Activated CD4-positive, alpha-beta T cell treated with anti-CD3 and anti-CD28 coated beads, Interleukin-2, amount 10 ng/mL, durations not matched to agents 7 days and 5 days (primary cell): ENCODE measurements at regions of chr5 and their contacts with region 1.

Region 1: DNA sequence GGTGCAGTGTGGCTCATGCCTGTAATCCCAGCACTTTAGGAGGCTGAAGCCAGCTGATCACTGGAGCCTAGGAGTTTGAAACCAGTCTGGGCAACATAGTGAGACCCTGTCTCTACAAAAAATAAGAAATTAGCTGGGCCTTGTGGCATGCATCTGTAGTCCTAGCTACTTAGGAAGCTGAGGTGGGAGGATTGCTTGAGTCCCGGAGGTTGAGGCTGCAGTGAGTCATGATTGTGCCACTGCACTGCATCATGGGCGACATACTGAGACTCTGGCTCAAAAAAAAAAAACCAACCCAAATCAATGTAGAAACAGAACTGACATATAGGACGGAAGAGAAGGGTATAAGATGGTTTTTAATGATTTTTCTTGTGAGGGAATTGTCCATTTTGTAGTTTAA is 27.7 kb downstream of the G3BP1 start:
- DNase-seq: no peak
- H3K4me3 Mint-ChIP-seq: no peak overlapping the region
- H3K27ac Mint-ChIP-seq: no peak overlapping the region
- H3K4me1 Mint-ChIP-seq: peaks cover 22% of the 10 kb centered on the region
- H3K27me3 Mint-ChIP-seq: no peaks in the 10 kb centered on the region

Region 2: GRCh38 chr5:151758430-151759241 is 40.8 kb before region 1 on chr5 and contains the start of gene ATOX1:
- CTCF ChIA-PET with region 1: no interaction called
- POLR2A ChIA-PET with region 1: no interaction called
- DNase-seq: peak; percentile 90
- H3K4me3 Mint-ChIP-seq: peak within 1 kb of the TSS; percentile 76
- H3K27ac Mint-ChIP-seq: peak within 1 kb of the TSS; percentile 85
- H3K4me1 Mint-ChIP-seq: peaks cover 36% of the 10 kb centered on the region
- H3K27me3 Mint-ChIP-seq: no peaks in the 10 kb centered on the region
- total RNA-seq, gene ATOX1: 46.9 to 48.1 TPM

Region 3: GRCh38 chr5:151787817-151788216 is 11.6 kb before region 1 on chr5:
- CTCF ChIA-PET with region 1: interaction called, 20 read pairs
- POLR2A ChIA-PET with region 1: no interaction called
- DNase-seq: no peak
- H3K4me3 Mint-ChIP-seq: no peak overlapping the region
- H3K27ac Mint-ChIP-seq: no peak overlapping the region
- H3K4me1 Mint-ChIP-seq: peaks cover 21% of the 10 kb centered on the region
- H3K27me3 Mint-ChIP-seq: no peaks in the 10 kb centered on the region